ENCODE measurements at regions of chr12 and their contacts with region 1.

Region 1: GRCh38 chr12:95217377-95218149 is at the starts of genes FGD6 and VEZT:
- DNase-seq: peak; percentile 99
- ATAC-seq: peak; percentile 96
- total RNA-seq, gene FGD6: 22.7 TPM
- total RNA-seq, gene VEZT: 55.5 TPM

Region 2: GRCh38 chr12:95158919-95159318 is 58.6 kb before region 1 on chr12:
- intact Hi-C with region 1: loop called (anchors 5 kb)
- DNase-seq: no peak
- ATAC-seq: peak; percentile 74

Region 3: DNA sequence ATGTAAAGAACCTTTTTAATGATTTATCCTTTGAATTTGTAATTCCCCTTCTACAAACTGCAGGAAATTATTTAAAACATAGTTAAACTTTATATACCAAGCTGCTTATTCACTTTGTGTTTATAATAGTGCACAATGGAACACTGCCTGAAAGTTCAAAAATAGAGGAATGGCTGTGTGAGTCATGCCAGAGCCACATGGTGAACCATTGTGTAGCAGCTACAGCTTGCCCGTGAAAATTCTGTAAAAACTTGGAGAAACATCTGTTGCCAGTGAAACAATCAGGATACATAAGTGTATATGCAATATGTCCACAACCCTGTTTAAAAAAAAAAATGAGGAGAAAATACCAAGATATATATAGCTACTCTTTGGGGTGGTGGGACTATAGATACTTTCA is 59.6 kb after region 1 on chr12:
- intact Hi-C with region 1: no loop called
- DNase-seq: no peak
- ATAC-seq: no peak

Measured in Right ventricle myocardium superior (tissue), 1 donor.